ENCODE measurements at regions of chr22 and their contacts with region 1.

Region 1: DNA sequence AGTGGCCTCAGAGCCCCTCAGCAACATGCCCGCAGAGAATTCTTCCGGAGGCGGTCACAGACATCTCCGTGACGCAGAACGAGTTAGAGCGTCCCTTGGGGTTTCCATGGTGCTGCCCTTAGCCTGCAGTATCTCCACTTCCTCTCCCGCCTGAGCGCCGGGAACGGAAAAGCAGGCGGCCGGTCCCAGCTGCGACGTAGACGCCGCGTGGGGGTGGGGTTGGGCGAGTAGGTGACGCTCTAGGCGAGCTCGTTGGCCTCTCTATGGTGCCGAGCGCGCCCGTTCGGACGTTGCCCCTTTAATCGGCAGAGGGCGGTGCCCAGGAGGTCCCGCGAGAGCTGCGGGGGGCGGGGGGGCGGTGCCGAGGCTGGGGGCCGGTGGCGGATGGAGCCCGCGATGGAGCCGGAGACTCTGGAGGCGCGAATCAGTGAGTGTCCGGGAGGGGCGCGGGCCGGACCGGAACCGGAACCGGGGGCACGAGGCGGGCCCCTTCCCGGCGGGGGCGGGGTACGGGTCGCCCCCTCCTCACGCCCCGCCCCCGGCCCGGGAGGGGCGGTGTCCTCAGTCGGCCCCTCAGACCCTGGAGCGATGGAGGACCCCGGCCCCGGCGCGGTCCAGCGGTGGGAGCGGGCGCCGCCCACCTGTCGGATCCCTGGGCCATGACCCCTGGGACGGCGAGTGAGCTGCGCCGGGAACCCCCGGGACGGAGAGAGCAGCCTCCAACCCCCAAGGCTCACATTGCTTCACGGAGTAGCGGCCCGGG is at the start of gene GGA1:
- DNase-seq: peak; percentile 98
- H3K4me3 Mint-ChIP-seq: peak within 1 kb of the TSS; percentile 90
- H3K27ac Mint-ChIP-seq: peak within 1 kb of the TSS; percentile 95
- H3K4me1 Mint-ChIP-seq: peaks cover 58% of the 10 kb centered on the region
- H3K27me3 Mint-ChIP-seq: no peaks in the 10 kb centered on the region
- total RNA-seq, gene GGA1: 58.5 to 62.8 TPM

Region 2: GRCh38 chr22:37538590-37539357 is 69.9 kb before region 1 on chr22:
- CTCF ChIA-PET with region 1: interaction called, 25 read pairs
- POLR2A ChIA-PET with region 1: no interaction called
- DNase-seq: peak; percentile 93
- H3K4me3 Mint-ChIP-seq: no peak overlapping the region
- H3K27ac Mint-ChIP-seq: peak overlapping the region; percentile 64
- H3K4me1 Mint-ChIP-seq: peaks cover 45% of the 10 kb centered on the region
- H3K27me3 Mint-ChIP-seq: peaks cover 17% of the 10 kb centered on the region

Region 3: GRCh38 chr22:37588546-37589215 is 20.0 kb before region 1 on chr22:
- CTCF ChIA-PET with region 1: interaction called, 89 read pairs
- POLR2A ChIA-PET with region 1: interaction called, 10 read pairs
- DNase-seq: no peak
- H3K4me3 Mint-ChIP-seq: no peak overlapping the region
- H3K27ac Mint-ChIP-seq: no peak overlapping the region
- H3K4me1 Mint-ChIP-seq: peaks cover 12% of the 10 kb centered on the region
- H3K27me3 Mint-ChIP-seq: peaks cover 2% of the 10 kb centered on the region

Region 4: DNA sequence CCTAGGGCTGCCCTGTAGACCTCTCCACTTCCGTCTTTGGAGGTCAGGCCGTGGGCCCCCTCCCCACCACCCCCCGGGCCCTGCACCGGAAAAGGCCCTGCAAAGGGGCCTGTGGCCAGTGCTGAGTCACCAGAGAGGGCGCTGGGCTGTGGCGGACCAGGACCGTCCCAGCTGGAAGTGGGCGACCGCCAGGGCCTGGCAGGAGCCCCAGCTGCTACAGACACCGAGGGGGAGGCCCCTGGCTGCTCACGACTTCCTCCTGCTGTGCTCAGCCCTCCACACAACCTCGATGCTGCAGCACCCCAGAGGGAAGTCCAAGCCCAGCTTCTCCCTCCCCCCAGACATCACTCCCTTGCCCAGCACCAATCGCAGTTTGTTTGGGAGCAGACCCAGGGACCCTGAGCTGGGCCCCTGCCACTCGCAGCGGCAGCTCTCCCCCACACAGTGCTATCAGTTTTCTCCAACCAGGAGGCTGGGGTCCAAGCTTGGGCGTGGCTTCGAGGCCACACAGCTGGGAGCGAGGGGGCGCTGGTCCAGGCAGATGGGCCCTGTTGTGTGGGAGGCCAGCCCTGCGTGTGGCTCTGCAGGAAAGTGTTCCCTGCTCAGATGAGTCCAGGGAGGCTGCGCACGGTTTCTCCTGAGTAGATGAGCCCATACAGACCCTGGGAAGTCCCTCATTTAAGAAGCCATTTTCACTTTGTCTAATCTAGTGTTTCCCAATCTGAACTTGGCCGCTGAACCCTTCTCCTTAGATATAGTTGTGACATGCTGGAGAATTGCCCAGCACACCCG is 25.2 kb after region 1 on chr22:
- CTCF ChIA-PET with region 1: interaction called, 17 read pairs
- POLR2A ChIA-PET with region 1: interaction called, 3 read pairs
- DNase-seq: peak; percentile 62
- H3K4me3 Mint-ChIP-seq: peak overlapping the region; percentile 41
- H3K27ac Mint-ChIP-seq: peak overlapping the region; percentile 96
- H3K4me1 Mint-ChIP-seq: peaks cover 77% of the 10 kb centered on the region
- H3K27me3 Mint-ChIP-seq: no peaks in the 10 kb centered on the region

Region 5: GRCh38 chr22:37676736-37677492 is 68.3 kb after region 1 on chr22:
- CTCF ChIA-PET with region 1: interaction called, 27 read pairs
- POLR2A ChIA-PET with region 1: no interaction called
- DNase-seq: peak; percentile 94
- H3K4me3 Mint-ChIP-seq: peak overlapping the region; percentile 93
- H3K27ac Mint-ChIP-seq: peak overlapping the region; percentile 100
- H3K4me1 Mint-ChIP-seq: peaks cover 72% of the 10 kb centered on the region
- H3K27me3 Mint-ChIP-seq: no peaks in the 10 kb centered on the region